PC-3 (cell line): ENCODE measurements at regions of chr20 and their contacts with region 1.

Region 1: DNA sequence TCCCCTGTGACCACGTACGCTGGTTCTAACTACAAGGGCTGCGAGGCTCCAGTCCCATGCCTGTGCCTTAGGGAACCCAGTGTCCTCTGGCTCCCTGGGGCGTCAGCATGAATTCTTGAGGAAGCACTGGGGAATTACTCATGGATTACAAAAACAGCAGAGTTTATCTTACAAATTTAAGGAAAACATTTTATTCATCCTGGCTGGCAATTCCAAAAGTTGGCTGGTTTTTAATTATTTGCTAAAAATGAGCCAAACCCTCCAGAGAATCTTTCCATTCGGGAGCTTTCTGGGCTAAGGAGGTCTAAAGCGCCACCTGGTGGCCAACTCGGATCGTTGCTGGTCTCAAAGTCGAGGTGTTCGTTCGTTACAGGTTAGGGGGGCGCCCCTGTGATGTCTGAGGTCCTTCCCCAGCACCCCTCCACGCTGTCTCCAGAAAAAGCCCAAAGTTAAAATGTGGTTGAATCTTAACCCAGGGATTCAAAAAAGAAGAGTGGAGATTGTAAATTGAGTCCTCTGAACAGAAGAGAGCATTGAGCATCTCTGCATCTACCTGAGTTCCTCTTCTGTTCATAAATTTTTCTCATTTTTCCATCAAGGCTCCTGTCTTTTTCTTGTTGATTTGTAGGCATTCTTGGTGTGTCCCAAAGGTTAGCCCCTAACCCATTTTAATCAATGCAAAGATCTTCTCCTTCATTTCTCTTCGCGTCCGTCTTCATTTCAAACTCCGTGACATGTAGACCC is 99.4 kb downstream of the BFSP1 start:
- DNase-seq: peak; percentile 70
- ATAC-seq: peak; percentile 61
- H3K4me3 ChIP-seq: no peak overlapping the region
- H3K27ac ChIP-seq: no peak overlapping the region
- H3K4me1 ChIP-seq: no peaks in the 10 kb centered on the region
- H3K27me3 ChIP-seq: peaks cover 83% of the 10 kb centered on the region
- CTCF ChIP-seq: peak; percentile 99

Region 2: GRCh38 chr20:16821211-16822089 is 610.3 kb before region 1 on chr20:
- CTCF ChIA-PET with region 1: no interaction called
- POLR2A ChIA-PET with region 1: no interaction called
- intact Hi-C with region 1: loop called (anchors 5 kb)
- DNase-seq: peak; percentile 69
- ATAC-seq: peak; percentile 57
- H3K4me3 ChIP-seq: no peak overlapping the region
- H3K27ac ChIP-seq: no peak overlapping the region
- H3K4me1 ChIP-seq: peaks cover 14% of the 10 kb centered on the region
- H3K27me3 ChIP-seq: peaks cover 32% of the 10 kb centered on the region; the same call in 1 of the 2 replicates
- CTCF ChIP-seq: peak; percentile 95